Right ventricle myocardium superior (tissue), 1 donor: ENCODE measurements at regions of chr14 and their contacts with region 1.

Region 1: DNA sequence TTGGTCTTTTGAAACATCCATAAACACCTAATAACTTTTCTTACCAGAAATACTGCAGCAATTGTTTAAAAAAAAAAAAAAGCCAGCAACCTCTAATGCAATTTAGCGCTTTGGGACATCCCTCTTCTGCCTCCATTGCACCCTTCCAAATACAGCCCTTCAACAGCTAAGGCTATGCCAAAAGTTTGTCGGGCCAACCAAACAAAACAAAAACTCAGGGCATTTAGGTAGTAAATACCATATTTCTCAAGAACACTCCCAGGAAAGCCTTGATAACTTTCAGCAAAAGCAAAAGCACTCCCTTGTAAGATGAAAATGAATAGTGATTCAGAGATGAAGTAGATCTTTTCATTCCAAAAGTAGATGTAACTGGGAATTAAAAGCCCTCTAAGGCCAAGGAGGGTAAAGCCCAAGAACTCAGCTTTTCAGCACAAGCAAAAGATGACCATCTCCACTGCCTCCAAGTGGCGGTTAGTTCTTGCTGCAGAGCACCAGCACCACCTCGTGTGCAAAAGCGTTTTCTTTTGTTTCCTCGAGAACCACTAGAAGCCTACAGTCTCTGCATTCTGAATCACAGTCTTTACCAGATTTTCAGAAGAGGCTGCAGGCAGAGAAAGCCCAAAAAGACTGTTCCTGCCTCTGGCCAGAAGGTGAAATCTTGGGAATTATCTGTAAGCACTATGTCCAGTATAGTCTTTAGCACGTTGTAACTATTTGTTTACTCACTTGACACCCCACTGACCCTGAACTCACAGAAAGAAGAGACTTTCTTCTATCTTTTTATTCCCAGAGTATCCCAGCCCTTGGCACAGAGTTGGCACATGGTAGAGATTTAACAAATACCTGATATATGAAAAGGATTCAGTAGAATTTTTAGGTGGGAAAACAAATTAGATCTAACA is 53.1 kb downstream of the SIX6 start:
- DNase-seq: peak; percentile 42
- ATAC-seq: peak; percentile 92

Region 2: GRCh38 chr14:60195179-60195810 is 366.8 kb before region 1 on chr14:
- intact Hi-C with region 1: loop called (anchors 10 kb)
- DNase-seq: no peak
- ATAC-seq: peak; percentile 63

Region 3: DNA sequence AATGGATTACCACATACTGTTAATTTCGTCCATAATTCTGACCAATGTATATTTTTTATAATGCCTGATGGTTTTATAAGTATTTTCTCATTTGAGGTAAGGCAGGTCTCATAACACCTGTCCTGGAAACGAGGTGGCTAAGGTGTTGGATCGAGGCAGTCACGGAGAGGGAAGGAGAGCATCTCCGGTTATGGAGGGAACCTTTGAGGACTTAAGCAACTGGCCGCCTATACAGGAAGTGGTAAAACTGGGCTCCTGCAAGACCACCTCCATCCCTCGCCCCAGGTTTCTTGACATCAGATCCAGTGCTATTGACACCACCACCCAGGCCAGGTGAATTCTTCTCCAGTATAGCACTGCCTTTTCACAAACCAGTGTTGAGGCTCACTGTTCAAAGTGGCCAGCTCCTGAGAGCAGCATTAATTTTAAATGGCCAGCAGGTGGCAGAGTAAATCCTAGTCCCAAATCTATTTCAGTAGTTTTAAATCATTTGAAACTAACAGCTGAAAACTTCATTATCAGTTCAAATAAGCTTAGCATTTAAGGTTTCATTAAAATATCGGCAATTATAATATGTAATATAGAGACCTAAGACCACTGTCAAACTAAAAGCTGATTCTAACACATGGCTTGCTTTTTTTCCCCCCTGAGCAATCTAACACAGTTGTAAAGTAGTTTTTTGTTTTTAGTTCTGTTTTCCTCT is 212.3 kb before region 1 on chr14:
- intact Hi-C with region 1: loop called (anchors 10 kb)
- DNase-seq: no peak
- ATAC-seq: peak; percentile 81

Region 4: GRCh38 chr14:60455875-60456274 is 106.2 kb before region 1 on chr14:
- intact Hi-C with region 1: no loop called
- DNase-seq: no peak
- ATAC-seq: no peak